Naive thymus-derived CD4-positive, alpha-beta T cell (primary cell): ENCODE measurements at regions of chr1 and their contacts with region 1.

Region 1: GRCh38 chr1:151611832-151612500 is at the start of gene SNX27:
- DNase-seq: peak; percentile 76 to 94 (median 87)
- ATAC-seq: peak; percentile 95
- H3K4me3 ChIP-seq: peak within 1 kb of the TSS; percentile 80
- H3K4me3 Mint-ChIP-seq: peak within 1 kb of the TSS; percentile 89 to 100 (median 97)
- H3K27ac ChIP-seq: peak within 1 kb of the TSS; percentile 98
- H3K27ac Mint-ChIP-seq: peak within 1 kb of the TSS; percentile 88 to 98 (median 92)
- H3K4me1 ChIP-seq: peaks cover 11 to 18% of the 10 kb centered on the region in 2 donors
- H3K4me1 Mint-ChIP-seq: peaks cover 40 to 50% (median 45%) of the 10 kb centered on the region in 7 donors
- H3K27me3 ChIP-seq: no peaks in the 10 kb centered on the region
- H3K27me3 Mint-ChIP-seq: peaks cover 0 to 11% (median 6%) of the 10 kb centered on the region in 5 donors
- total RNA-seq, gene SNX27: 25.5 to 42.1 (median 41.0) TPM

Region 2: DNA sequence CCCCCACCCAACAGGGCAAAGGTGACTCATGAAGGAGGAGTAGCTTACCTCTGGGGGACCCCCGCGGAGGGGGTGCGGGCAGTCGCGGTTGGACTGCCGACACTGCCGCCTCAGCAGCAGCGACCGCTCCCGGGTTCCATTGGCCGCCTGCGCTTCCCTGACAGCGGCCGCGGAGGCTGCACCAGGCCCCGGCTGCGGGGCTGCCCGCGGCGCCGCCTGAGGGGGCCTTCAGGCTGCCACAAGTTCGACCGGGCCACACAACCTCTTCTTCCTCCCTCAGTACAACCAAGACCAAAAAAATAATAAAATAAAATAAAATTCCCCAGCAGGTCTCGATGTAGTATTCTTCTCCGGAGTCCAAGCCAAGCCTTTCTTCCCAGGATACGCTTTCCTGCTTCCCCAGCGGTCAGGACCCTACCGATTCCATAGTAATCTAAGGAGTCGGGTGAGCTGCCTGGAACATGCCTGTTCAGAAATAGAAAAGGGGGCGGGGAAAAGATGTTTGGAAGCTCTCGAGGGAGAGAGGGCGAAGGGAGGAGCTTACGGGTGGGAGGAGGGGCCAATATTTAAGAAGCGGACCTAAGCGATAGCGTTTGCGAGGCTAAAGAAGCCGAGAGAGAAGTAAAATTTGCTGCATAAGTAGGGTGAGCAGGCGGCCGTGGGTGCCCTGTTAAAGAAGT is 284.6 kb before region 1 on chr1 and contains the start of gene PI4KB:
- CTCF ChIA-PET with region 1: no interaction called
- POLR2A ChIA-PET with region 1: no interaction called
- intact Hi-C with region 1: loop called in 1 of 2 experiments (anchors 1 kb)
- DNase-seq: peak; percentile 72 to 96 (median 93)
- ATAC-seq: peak; percentile 96
- H3K4me3 ChIP-seq: peak within 1 kb of the TSS; percentile 72
- H3K4me3 Mint-ChIP-seq: peak within 1 kb of the TSS; percentile 91 to 100 (median 96)
- H3K27ac ChIP-seq: peak within 1 kb of the TSS; percentile 96
- H3K27ac Mint-ChIP-seq: peak within 1 kb of the TSS; percentile 90 to 100 (median 97)
- H3K4me1 ChIP-seq: peaks cover 6 to 18% of the 10 kb centered on the region in 2 donors
- H3K4me1 Mint-ChIP-seq: peaks cover 14 to 53% (median 44%) of the 10 kb centered on the region in 7 donors
- H3K27me3 ChIP-seq: no peaks in the 10 kb centered on the region
- H3K27me3 Mint-ChIP-seq: peaks cover 0 to 2% (median 0%) of the 10 kb centered on the region in 5 donors
- total RNA-seq, gene PI4KB: 64.0 to 91.9 (median 76.3) TPM

Region 3: GRCh38 chr1:151539990-151540981 is 71.7 kb before region 1 on chr1 and contains the start of gene TUFT1:
- CTCF ChIA-PET with region 1: no interaction called
- POLR2A ChIA-PET with region 1: interaction called, 4 read pairs
- intact Hi-C with region 1: loop called (anchors 1 to 5 kb)
- DNase-seq: peak; percentile 89 to 95 (median 93)
- ATAC-seq: peak; percentile 100
- H3K4me3 ChIP-seq: peak within 1 kb of the TSS; percentile 90
- H3K4me3 Mint-ChIP-seq: peak within 1 kb of the TSS; percentile 91 to 98 (median 97)
- H3K27ac ChIP-seq: peak within 1 kb of the TSS; percentile 71
- H3K27ac Mint-ChIP-seq: peak within 1 kb of the TSS; percentile 70 to 93 (median 89)
- H3K4me1 ChIP-seq: peaks cover 11 to 18% of the 10 kb centered on the region in 2 donors
- H3K4me1 Mint-ChIP-seq: peaks cover 12 to 31% (median 22%) of the 10 kb centered on the region in 7 donors
- H3K27me3 ChIP-seq: no peaks in the 10 kb centered on the region
- H3K27me3 Mint-ChIP-seq: peaks cover 6 to 24% (median 8%) of the 10 kb centered on the region in 5 donors
- total RNA-seq, gene TUFT1: 0.92 to 4.8 (median 3.4) TPM

Region 4: GRCh38 chr1:151762941-151763921 is 151.3 kb after region 1 on chr1 and contains the start of gene MRPL9:
- CTCF ChIA-PET with region 1: interaction called, 4 read pairs
- POLR2A ChIA-PET with region 1: interaction called, 12 read pairs
- intact Hi-C with region 1: loop called (anchors 1 kb)
- DNase-seq: peak; percentile 73 to 85 (median 82)
- ATAC-seq: peak; percentile 99
- H3K4me3 ChIP-seq: peak within 1 kb of the TSS; percentile 76
- H3K4me3 Mint-ChIP-seq: peak within 1 kb of the TSS; percentile 91 to 98 (median 95)
- H3K27ac ChIP-seq: peak within 1 kb of the TSS; percentile 81
- H3K27ac Mint-ChIP-seq: peak within 1 kb of the TSS; percentile 92 to 100 (median 97)
- H3K4me1 ChIP-seq: peaks cover 11 to 12% of the 10 kb centered on the region in 2 donors
- H3K4me1 Mint-ChIP-seq: peaks cover 13 to 28% (median 21%) of the 10 kb centered on the region in 7 donors
- H3K27me3 ChIP-seq: no peaks in the 10 kb centered on the region
- H3K27me3 Mint-ChIP-seq: no peaks in the 10 kb centered on the region
- total RNA-seq, gene MRPL9: 77.0 to 133 (median 81.5) TPM

Region 5: GRCh38 chr1:151909150-151910149 is 297.5 kb after region 1 on chr1 and contains the start of gene THEM4:
- CTCF ChIA-PET with region 1: no interaction called
- POLR2A ChIA-PET with region 1: no interaction called
- intact Hi-C with region 1: loop called in 1 of 2 experiments (anchors 1 kb)
- DNase-seq: peak; percentile 67 to 94 (median 80)
- ATAC-seq: peak; percentile 97
- H3K4me3 ChIP-seq: peak within 1 kb of the TSS; percentile 67
- H3K4me3 Mint-ChIP-seq: peak within 1 kb of the TSS; percentile 79 to 93 (median 88)
- H3K27ac ChIP-seq: peak within 1 kb of the TSS; percentile 82
- H3K27ac Mint-ChIP-seq: peak within 1 kb of the TSS; percentile 82 to 98 (median 90)
- H3K4me1 ChIP-seq: peaks cover 23 to 39% of the 10 kb centered on the region in 2 donors
- H3K4me1 Mint-ChIP-seq: peaks cover 21 to 47% (median 37%) of the 10 kb centered on the region in 7 donors
- H3K27me3 ChIP-seq: no peaks in the 10 kb centered on the region
- H3K27me3 Mint-ChIP-seq: peaks cover 0 to 8% (median 0%) of the 10 kb centered on the region in 5 donors
- total RNA-seq, gene THEM4: 37.6 to 143 (median 44.6) TPM